Common myeloid progenitor, CD34-positive (primary cell): ENCODE measurements at regions of chr1 and their contacts with region 1.

Region 1: DNA sequence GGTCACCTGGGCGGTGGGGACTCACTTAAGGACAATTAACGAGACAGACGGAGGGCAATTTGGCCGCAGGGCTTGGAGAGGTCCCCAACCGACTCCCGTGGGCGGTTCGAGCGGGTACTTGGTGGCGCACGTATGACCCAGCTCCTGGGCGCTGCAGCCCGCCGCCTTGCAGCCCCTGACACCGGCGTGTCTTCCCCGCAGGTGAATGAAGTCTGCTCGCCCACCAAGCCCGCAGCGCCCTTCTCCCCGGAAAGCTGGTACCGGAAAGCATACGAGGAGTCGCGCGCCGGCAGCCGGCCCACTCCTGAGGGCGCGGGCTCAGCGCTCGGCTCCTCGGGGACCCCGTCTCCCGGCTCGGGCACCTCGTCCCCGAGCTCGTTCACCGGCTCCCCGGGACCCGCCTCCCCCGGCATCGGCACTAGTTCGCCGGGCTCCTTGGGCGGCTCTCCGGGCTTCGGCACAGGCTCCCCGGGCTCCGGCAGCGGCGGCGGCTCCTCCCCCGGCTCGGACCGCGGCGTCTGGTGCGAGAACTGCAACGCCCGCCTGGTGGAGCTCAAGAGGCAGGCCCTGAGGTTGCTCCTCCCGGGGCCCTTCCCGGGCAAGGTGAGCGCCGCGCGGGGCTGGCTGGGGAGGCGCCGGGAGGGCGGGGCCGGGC is 1.4 kb downstream of the KIF26B start:
- DNase-seq: peak; percentile 76 to 85 (median 82)
- H3K4me3 ChIP-seq: peak overlapping the region; percentile 48 to 79 (median 73)
- H3K27ac ChIP-seq: no peak overlapping the region
- H3K4me1 ChIP-seq: peaks cover 5 to 41% (median 37%) of the 10 kb centered on the region in 4 experiments
- H3K27me3 ChIP-seq: peaks cover 2 to 35% (median 27%) of the 10 kb centered on the region in 5 experiments

Region 2: GRCh38 chr1:245166471-245166885 is 10.3 kb after region 1 on chr1:
- CTCF ChIA-PET with region 1: interaction called, 32 read pairs
- POLR2A ChIA-PET with region 1: interaction called, 4 read pairs
- DNase-seq: peak in 1 of 3 donors; percentile 31
- H3K4me3 ChIP-seq: peak overlapping the region in 4 of 7 experiments; percentile 35 to 72 (median 61)
- H3K27ac ChIP-seq: no peak overlapping the region
- H3K4me1 ChIP-seq: peaks cover 9 to 38% (median 28%) of the 10 kb centered on the region in 4 experiments
- H3K27me3 ChIP-seq: peaks cover 0 to 2% (median 0%) of the 10 kb centered on the region in 5 experiments

Region 3: GRCh38 chr1:245380790-245381535 is 224.8 kb after region 1 on chr1:
- CTCF ChIA-PET with region 1: interaction called, 13 read pairs
- POLR2A ChIA-PET with region 1: interaction called, 4 read pairs
- DNase-seq: peak; percentile 43 to 62 (median 46)
- H3K4me3 ChIP-seq: no peak overlapping the region
- H3K27ac ChIP-seq: no peak overlapping the region
- H3K4me1 ChIP-seq: no peaks in the 10 kb centered on the region
- H3K27me3 ChIP-seq: peaks cover 0 to 4% (median 0%) of the 10 kb centered on the region in 5 experiments

Region 4: GRCh38 chr1:246002725-246003441 is 846.7 kb after region 1 on chr1:
- CTCF ChIA-PET with region 1: interaction called, 26 read pairs
- POLR2A ChIA-PET with region 1: no interaction called
- DNase-seq: peak; percentile 84 to 93 (median 87)
- H3K4me3 ChIP-seq: no peak overlapping the region
- H3K27ac ChIP-seq: no peak overlapping the region
- H3K4me1 ChIP-seq: peaks cover 0 to 20% (median 4%) of the 10 kb centered on the region in 4 experiments
- H3K27me3 ChIP-seq: no peaks in the 10 kb centered on the region